ENCODE measurements at regions of chr10 and their contacts with region 1.

Region 1: GRCh38 chr10:28179006-28179742 is 123.7 kb downstream of the MPP7 start:
- DNase-seq: no peak
- H3K4me3 ChIP-seq: peak overlapping the region in 1 of 2 donors; percentile 53
- H3K27ac ChIP-seq: peak overlapping the region in 1 of 2 donors; percentile 60
- H3K4me1 ChIP-seq: peaks cover 5 to 12% of the 10 kb centered on the region in 2 donors
- H3K27me3 ChIP-seq: no peaks in the 10 kb centered on the region
- CTCF ChIP-seq: peak; percentile 48 to 72 (median 61)

Region 2: DNA sequence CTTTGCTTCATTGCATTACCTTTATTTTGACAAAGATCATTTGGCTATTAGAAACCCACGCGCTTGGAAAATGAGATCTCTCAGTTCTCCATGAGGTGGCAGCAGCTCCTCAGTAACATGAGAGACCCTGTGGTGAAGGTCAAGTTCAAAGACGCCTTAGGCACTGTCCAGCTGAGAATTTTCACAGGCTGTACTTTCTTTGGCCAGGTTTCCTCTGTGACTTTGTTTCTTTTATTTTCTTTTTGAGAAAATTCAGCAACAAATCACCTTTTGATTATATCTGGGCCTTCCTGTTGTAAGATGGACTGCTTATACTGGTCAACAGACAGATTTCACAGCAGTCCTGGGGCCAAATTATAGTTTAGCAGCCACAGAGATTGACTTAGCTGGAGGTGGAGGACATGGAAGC is 620.6 kb before region 1 on chr10:
- intact Hi-C with region 1: loop called (anchors 2 kb)
- DNase-seq: peak in 1 of 2 donors; percentile 67
- H3K4me3 ChIP-seq: no peak overlapping the region
- H3K27ac ChIP-seq: no peak overlapping the region
- H3K4me1 ChIP-seq: no peaks in the 10 kb centered on the region
- H3K27me3 ChIP-seq: no peaks in the 10 kb centered on the region
- CTCF ChIP-seq: peak; percentile 75 to 86 (median 77)

Region 3: GRCh38 chr10:27783660-27784059 is 395.5 kb before region 1 on chr10:
- intact Hi-C with region 1: loop called (anchors 10 kb)
- DNase-seq: peak in 1 of 2 donors; percentile 66
- H3K4me3 ChIP-seq: no peak overlapping the region
- H3K27ac ChIP-seq: no peak overlapping the region
- H3K4me1 ChIP-seq: peaks cover 6 to 13% of the 10 kb centered on the region in 2 donors
- H3K27me3 ChIP-seq: no peaks in the 10 kb centered on the region
- CTCF ChIP-seq: peak in 2 of 3 experiments; percentile 37 to 48

Region 4: DNA sequence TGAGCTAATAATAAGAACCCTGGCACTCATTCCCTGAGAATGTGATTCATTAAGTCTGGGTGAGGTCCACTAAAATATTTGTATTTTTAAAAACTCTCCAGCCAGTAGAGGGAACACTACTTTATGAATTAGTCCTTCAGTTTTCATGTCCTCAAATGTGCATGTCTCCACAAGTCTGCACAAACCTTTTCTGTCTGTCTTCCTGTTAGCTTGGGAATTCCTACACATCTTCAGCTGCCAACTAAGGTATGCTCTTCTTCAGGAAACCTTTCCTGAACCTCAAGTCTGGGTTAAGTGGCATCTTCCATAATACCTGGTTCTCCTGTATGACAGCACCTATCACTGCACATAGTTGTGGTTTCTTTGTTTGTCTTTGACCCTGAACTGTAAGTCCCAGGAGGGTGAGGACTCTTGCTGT is 313.9 kb before region 1 on chr10:
- intact Hi-C with region 1: loop called (anchors 5 kb)
- DNase-seq: no peak
- H3K4me3 ChIP-seq: no peak overlapping the region
- H3K27ac ChIP-seq: no peak overlapping the region
- H3K4me1 ChIP-seq: peaks cover 0 to 2% of the 10 kb centered on the region in 2 donors
- H3K27me3 ChIP-seq: no peaks in the 10 kb centered on the region
- CTCF ChIP-seq: peak in 1 of 3 experiments; percentile 23

Region 5: DNA sequence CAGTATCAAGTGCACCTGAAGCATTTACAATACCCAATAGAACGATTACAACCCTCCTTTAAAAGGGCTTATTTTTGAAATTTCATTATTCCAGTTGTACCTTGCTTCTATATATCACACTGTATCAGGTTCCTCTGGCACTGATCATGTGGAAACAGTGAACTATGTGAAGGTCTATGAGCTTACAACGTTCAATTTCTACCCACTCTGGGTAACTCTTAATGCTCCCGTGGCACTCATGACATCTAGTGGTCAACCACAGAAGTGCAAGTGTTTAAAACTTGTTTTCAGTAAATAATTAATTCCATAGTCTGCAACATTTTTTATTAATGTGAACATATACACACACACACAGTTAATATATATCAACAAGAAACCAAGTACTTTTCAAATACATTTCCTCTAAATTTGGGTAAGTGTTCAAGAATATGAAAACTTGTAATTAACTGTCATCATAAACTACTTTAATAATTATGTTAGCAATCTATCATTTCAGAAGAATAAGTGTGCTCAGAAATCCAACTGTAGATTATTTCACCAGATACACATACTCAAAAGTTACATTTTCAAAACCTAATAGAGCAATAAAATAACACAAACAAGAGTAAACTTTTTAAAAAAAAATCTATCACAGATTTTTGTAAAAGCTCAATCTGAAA is 62.7 kb after region 1 on chr10:
- intact Hi-C with region 1: loop called (anchors 2 kb)
- DNase-seq: no peak
- H3K4me3 ChIP-seq: no peak overlapping the region
- H3K27ac ChIP-seq: no peak overlapping the region
- H3K4me1 ChIP-seq: no peaks in the 10 kb centered on the region
- H3K27me3 ChIP-seq: no peaks in the 10 kb centered on the region
- CTCF ChIP-seq: peak; percentile 82 to 90 (median 83)